ENCODE measurements at regions of chr16 and their contacts with region 1.

Region 1: GRCh38 chr16:77584205-77584859 is 138.0 kb upstream of the NUDT7 start:
- DNase-seq: no peak
- H3K4me3 ChIP-seq: no peak overlapping the region
- H3K27me3 ChIP-seq: no peaks in the 10 kb centered on the region; the same call in 1 of the 2 replicates
- CTCF ChIP-seq: peak; percentile 80

Region 2: DNA sequence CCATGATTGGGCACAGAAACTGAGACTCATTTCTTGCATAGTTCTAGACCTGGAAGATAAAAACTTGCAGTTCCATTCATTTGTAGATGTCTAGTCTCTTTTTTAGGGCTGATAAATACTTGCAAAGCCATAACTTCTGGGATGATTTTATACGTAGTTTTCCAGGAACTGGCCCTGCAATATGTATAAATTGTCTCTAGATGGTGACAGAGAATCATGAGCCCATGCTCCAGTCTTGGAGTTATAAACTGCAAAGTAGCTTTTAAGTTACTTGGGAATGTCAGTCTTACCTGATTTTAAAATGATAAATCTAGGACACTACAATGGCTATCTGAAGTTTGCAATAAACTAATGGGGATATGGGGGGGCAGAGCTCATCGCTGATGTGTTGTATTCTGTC is 146.5 kb before region 1 on chr16:
- CTCF ChIA-PET with region 1: interaction called, 11 read pairs
- POLR2A ChIA-PET with region 1: no interaction called
- DNase-seq: no peak
- H3K4me3 ChIP-seq: no peak overlapping the region
- H3K27me3 ChIP-seq: peaks cover 11% of the 10 kb centered on the region
- CTCF ChIP-seq: no peak

Region 3: GRCh38 chr16:77569406-77569805 is 14.9 kb before region 1 on chr16:
- CTCF ChIA-PET with region 1: interaction called, 43 read pairs
- POLR2A ChIA-PET with region 1: no interaction called
- DNase-seq: no peak
- H3K4me3 ChIP-seq: no peak overlapping the region
- H3K27me3 ChIP-seq: no peaks in the 10 kb centered on the region
- CTCF ChIP-seq: no peak

Measured in BJ (cell line).